Posterior vena cava (tissue), 2 donors: ENCODE measurements at regions of chr7 and their contacts with region 1.

Region 1: DNA sequence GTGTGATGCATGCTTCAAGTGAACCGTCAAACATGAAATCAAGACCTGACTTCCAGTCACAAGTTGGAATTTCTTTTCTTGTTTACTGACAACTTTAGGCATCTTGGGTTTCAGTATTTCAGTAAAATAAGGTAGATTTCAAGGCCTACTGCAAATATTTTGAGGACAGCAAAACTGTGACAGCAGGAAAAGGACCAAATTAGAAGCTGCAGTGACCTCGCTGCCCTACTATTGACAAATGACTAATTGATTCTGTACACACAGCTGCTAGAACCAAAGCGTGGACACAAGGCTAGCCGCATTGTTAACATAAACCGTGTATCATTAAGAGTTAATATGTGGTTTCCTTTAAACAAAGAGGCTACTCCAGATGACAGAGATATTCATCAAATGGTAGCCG is 105.7 kb upstream of the SEC61G start:
- DNase-seq: no peak

Region 2: GRCh38 chr7:54888067-54888733 is 23.5 kb after region 1 on chr7:
- intact Hi-C with region 1: loop called in 1 of 2 experiments (anchors 1 kb)
- DNase-seq: no peak